Esophagus squamous epithelium (tissue), 5 donors: ENCODE measurements at regions of chr10 and their contacts with region 1.

Region 1: DNA sequence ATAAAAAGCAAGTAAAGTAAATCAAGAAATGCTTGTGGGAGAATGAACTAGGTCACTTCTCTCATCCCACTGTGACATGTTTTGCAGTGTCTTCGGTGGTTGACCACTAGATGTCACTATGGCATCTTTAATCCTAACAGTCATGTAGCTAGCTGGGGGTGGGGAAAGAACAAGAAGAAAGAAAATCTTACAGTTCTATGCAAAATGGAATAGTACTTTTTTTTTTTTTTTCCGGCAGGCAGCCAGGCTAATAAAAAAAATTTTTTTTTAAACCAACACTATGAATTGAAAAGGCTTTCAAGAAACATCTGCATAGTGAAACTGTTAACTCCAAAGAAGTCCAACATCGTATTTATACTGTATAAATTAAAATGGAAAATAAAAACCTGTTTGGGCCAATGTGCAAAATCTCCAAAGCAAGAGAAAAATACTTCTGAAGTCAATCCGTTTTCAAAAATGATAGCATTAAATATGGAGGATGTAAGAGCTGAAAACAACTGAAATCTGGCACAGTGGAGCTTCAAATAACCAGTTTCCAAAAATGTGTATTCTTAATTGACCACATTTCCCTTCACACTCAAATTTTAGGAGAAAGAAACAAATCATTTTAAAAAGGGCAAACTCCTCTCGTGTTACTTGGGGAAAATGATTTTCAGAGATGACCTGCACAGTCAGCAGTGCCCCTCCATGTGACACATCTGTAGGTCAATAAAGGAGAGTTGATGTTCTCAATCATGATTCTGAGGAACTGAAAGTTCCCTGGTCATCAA is 38.5 kb downstream of the CDK1 start:
- DNase-seq: no peak
- H3K4me3 ChIP-seq: no peak overlapping the region
- H3K27ac ChIP-seq: peak overlapping the region in 2 of 4 donors; percentile 43
- H3K4me1 ChIP-seq: peaks cover 0 to 32% (median 4%) of the 10 kb centered on the region in 3 donors
- H3K27me3 ChIP-seq: no peaks in the 10 kb centered on the region
- CTCF ChIP-seq: peak; percentile 41 to 80 (median 70)
- POLR2A ChIP-seq: no peak

Region 2: GRCh38 chr10:60964257-60965235 is 147.7 kb after region 1 on chr10:
- intact Hi-C with region 1: loop called (anchors 5 kb)
- DNase-seq: no peak
- H3K4me3 ChIP-seq: no peak overlapping the region
- H3K27ac ChIP-seq: peak overlapping the region; percentile 9 to 74 (median 61)
- H3K4me1 ChIP-seq: peaks cover 0 to 24% (median 13%) of the 10 kb centered on the region in 3 donors
- H3K27me3 ChIP-seq: no peaks in the 10 kb centered on the region
- CTCF ChIP-seq: peak; percentile 35 to 85 (median 75)
- POLR2A ChIP-seq: no peak

Region 3: GRCh38 chr10:61279400-61279799 is 462.6 kb after region 1 on chr10:
- intact Hi-C with region 1: loop called (anchors 5 kb)
- DNase-seq: no peak
- H3K4me3 ChIP-seq: no peak overlapping the region
- H3K27ac ChIP-seq: no peak overlapping the region
- H3K4me1 ChIP-seq: peaks cover 0 to 17% (median 7%) of the 10 kb centered on the region in 3 donors
- H3K27me3 ChIP-seq: no peaks in the 10 kb centered on the region
- CTCF ChIP-seq: no peak
- POLR2A ChIP-seq: no peak